MCF 10A (cell line): ENCODE measurements at regions of chr15 and their contacts with region 1.

Region 1: DNA sequence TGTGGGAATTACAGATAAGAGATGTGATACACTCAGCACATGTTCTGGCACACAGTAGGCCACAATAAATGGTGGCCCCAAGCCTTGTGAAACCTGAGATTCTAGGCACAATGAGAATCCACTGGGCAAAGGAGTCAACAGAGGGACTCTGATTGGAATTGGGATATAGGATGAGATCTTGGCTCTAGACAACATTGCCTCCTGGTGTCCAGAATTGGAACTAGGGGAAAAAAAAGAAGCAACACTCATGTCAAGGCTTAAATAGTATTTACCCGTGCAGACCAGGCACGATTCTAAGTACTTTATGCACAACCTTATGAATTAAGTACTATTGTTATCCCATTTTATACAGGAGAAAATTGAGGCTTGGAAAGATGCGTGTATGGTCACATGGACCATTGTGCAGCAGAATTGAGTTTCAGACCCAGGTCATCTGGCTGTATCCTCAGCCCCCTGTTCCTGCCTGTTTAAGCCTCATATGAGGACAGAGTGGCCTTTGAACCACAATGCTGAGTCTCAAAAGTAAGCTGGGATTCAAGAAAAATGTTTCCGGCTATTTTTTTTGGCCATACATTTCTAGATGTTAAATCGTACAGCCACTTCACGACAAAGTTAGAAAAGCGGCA is 124.8 kb downstream of the SV2B start:
- DNase-seq: peak; percentile 68
- H3K4me3 Mint-ChIP-seq: no peak overlapping the region
- H3K27ac Mint-ChIP-seq: no peak overlapping the region
- H3K4me1 Mint-ChIP-seq: no peaks in the 10 kb centered on the region
- H3K27me3 Mint-ChIP-seq: peaks cover 62% of the 10 kb centered on the region
- CTCF ChIP-seq: peak; percentile 60

Region 2: GRCh38 chr15:91237196-91237844 is 12.5 kb after region 1 on chr15:
- CTCF ChIA-PET with region 1: interaction called, 11 read pairs
- POLR2A ChIA-PET with region 1: interaction called, 4 read pairs
- intact Hi-C with region 1: no loop called
- DNase-seq: no peak
- H3K4me3 Mint-ChIP-seq: no peak overlapping the region
- H3K27ac Mint-ChIP-seq: no peak overlapping the region
- H3K4me1 Mint-ChIP-seq: no peaks in the 10 kb centered on the region
- H3K27me3 Mint-ChIP-seq: peaks cover 22% of the 10 kb centered on the region
- CTCF ChIP-seq: no peak